ENCODE measurements at regions of chr6 and their contacts with region 1.

Region 1: GRCh38 chr6:135535989-135536414 is 38.5 kb upstream of the AHI1 start:
- DNase-seq: peak; percentile 52
- H3K4me3 ChIP-seq: no peak overlapping the region
- H3K27ac ChIP-seq: no peak overlapping the region
- H3K4me1 ChIP-seq: no peaks in the 10 kb centered on the region
- CTCF ChIP-seq: peak; percentile 90

Region 2: DNA sequence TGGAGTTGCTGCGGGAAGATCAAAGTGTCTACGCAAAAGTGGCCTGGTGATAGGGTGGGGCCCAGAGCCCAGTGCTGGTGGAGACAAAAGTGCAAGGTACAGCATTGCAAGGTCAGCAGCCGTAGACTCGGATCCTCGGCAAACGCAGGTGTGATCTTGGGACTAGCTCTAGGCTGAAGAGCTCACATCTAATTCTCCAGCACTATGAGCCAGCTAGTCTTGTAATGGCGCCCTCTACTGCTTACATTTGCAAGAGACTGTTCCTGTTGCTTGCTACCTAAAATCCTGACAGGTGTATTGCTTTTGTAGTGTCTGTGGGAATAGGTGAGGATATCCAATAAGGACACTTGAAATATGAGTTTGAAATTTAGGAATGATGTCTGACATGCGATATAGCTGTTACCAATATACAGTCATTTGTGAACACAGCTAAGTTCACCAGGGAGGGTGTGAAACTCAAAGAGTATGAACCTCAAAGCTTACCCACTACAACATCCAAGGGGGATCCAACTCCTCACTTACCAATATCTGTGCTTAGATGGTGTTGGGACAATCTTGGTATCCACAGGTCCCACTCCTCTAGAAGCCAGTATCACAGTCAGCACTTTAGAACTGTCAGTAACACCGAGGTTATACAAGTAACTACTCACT is 373.9 kb after region 1 on chr6:
- CTCF ChIA-PET with region 1: no interaction called
- POLR2A ChIA-PET with region 1: no interaction called
- intact Hi-C with region 1: loop called (anchors 10 kb)
- DNase-seq: peak; percentile 59
- H3K4me3 ChIP-seq: no peak overlapping the region
- H3K27ac ChIP-seq: no peak overlapping the region
- H3K4me1 ChIP-seq: no peaks in the 10 kb centered on the region
- CTCF ChIP-seq: peak; percentile 84

Region 3: GRCh38 chr6:136317021-136317694 is 781.2 kb after region 1 on chr6:
- CTCF ChIA-PET with region 1: no interaction called
- POLR2A ChIA-PET with region 1: no interaction called
- intact Hi-C with region 1: loop called (anchors 10 kb)
- DNase-seq: peak; percentile 67
- H3K4me3 ChIP-seq: no peak overlapping the region
- H3K27ac ChIP-seq: no peak overlapping the region
- H3K4me1 ChIP-seq: no peaks in the 10 kb centered on the region
- CTCF ChIP-seq: peak; percentile 88